ENCODE measurements at regions of chr2 and their contacts with region 1.

Region 1: DNA sequence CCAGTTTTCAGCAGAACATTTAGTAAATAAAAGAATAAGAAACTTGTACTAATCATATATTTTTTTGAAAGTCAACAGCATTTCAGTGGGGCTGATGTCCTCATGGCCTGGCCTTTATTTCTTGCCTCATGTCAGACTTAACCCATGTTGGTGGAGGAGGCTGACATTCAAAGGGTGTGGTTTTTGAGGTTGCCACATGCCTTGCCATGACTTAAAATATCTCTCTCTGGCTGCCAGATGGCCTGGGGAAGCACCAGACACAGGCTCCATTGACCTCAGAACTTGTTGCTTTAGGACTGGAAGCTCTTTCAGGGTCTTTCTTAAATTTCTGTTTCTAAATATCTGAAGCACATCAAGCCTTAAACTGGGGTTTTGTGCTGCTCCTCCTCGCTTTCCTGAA is 32.5 kb upstream of the CD28 start:
- DNase-seq: peak; percentile 75
- H3K4me3 Mint-ChIP-seq: no peak overlapping the region
- H3K27ac Mint-ChIP-seq: no peak overlapping the region
- H3K4me1 Mint-ChIP-seq: peaks cover 19% of the 10 kb centered on the region
- H3K27me3 Mint-ChIP-seq: no peaks in the 10 kb centered on the region

Region 2: DNA sequence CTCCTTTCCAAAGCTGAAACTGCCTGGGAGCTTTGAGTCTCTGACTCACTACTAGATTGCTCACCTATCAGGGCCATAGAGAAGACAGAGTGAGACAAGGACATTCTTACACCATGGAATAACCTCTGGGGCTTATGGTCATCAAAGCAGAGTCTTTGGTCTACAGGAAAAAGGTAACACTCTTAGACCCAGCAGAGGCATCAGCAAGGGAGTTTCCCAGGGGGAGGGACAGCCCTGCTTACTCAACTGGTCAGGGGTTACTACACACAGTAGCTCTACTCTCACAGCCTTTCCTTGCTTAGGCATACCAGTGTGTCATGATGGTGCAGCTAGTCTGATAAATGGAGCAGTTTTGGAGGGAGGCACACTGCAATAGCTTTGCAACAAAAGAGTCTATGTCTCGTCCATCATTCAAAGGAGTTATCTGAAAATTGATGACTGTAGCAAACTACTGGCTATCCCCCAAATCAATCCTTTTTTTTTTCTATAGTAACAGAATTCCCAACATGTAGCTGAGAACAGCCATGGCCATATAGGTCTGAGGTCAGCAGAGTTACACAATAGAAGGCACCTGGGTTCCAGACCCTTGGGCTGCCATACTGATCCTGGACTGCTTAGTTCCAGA is 10.1 kb after region 1 on chr2:
- CTCF ChIA-PET with region 1: no interaction called
- intact Hi-C with region 1: loop called (anchors 1 kb)
- DNase-seq: peak; percentile 77
- H3K4me3 Mint-ChIP-seq: no peak overlapping the region
- H3K27ac Mint-ChIP-seq: no peak overlapping the region
- H3K4me1 Mint-ChIP-seq: peaks cover 32% of the 10 kb centered on the region
- H3K27me3 Mint-ChIP-seq: no peaks in the 10 kb centered on the region